Left colon (tissue), 2 donors: ENCODE measurements at regions of chr16 and their contacts with region 1.

Region 1: DNA sequence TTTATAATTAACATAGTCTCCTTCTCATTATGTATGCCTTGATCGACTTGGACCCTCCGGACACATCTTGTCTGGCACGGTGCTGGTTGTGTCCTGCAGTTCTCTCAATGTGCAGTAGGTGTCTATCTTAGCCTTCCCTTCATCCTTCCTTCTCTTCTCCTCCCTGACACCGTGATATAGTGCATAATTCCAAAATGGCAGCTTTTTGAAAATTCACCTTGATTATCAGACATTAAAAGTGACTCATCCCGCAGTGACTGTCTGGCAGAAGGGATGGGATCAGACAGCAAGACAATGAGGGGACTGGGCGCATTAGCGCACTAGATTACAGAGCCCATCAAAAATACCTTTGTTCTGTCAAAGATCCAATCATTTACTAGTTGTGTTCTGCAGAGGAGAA is 70.0 kb upstream of the PMFBP1 start:
- DNase-seq: no peak
- ATAC-seq: peak; percentile 97

Region 2: DNA sequence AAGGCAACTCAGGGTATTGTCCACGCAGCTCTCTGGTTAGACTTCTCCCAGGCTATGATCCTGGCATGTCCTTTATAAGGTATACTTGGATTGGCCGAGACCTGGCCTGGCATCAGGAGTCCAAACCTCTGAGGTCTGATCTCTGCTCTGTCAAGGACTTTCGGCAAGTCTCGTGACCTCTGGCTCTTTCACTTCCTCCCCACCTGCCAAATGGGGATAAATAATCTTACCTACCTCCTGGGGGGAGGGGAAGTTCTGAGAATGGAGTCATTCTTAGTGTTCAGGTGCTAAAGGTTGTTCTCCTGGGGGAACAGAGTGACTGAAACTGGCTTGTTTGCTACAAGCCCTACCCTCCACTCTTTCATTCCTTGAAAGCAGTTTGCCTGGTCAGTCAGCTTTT is 388.5 kb before region 1 on chr16:
- intact Hi-C with region 1: no loop called
- DNase-seq: no peak
- ATAC-seq: no peak

Region 3: DNA sequence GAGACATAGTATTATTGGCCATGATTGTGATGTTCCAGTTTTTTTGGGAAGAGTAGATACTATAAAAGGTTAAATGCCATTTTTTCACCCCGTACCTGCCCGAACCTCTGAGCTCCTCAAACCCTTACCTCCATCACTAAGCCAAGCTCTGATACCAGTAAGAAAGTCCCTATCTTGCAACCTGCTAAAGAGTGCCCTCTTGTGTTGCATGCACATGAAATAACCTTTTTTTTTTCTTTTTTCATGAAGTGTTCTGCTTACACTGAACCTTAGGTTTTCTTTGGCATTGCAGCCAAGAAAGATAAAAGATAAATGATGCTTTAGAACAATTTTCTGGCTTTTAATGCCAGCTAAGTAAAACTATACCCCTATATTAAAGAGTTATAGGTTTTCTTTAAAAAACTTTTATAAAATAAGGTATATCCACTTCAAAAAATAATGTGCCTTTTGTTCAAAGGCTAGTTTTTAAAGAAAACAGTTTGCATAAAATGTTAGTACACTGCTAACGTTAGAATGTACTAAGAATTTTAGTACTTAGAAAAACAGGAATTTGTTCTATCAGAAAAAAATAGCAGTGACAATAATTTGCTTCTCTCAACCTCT is 225.3 kb after region 1 on chr16:
- intact Hi-C with region 1: loop called in 1 of 2 experiments (anchors 5 kb)
- DNase-seq: no peak
- ATAC-seq: peak; percentile 68